ENCODE measurements at regions of chr1 and their contacts with region 1.

Region 1: GRCh38 chr1:219427403-219427802 is 185.5 kb downstream of the ZC3H11B start:
- DNase-seq: no peak
- ATAC-seq: no peak
- H3K4me3 Mint-ChIP-seq: no peak overlapping the region
- H3K27ac Mint-ChIP-seq: no peak overlapping the region
- H3K4me1 Mint-ChIP-seq: peaks cover 5% of the 10 kb centered on the region
- H3K27me3 Mint-ChIP-seq: peaks cover 2% of the 10 kb centered on the region

Region 2: DNA sequence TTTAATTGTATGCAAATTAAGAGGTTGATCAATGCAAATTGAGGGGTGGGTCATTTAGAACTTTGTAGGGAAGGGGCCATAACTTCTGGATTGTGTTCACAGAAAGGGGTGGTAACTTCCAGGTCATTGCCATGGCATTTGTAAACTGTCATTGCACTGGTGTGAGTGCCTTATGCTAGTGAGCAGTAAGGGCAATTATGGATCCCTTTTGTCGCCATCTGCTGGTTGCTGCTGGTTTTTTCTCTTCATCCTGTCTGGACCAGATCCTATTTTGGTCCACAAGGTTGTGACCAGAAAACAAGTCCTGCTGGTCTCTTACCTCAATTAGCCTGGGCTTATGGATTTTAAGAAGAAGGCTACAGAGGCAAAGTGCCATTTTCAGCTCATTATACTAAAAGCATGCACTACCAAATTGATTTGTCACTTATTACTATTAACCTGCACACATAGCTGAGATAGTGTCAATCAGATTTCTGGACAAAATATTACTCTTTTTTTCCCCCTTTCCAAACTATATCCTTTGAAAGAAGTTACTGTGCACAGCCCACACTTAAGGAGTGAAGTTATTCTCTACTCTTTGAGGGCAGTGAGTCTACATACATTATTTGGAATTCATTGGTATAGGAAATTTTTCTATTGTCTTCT is 10.7 kb before region 1 on chr1:
- CTCF ChIA-PET with region 1: interaction called, 13 read pairs
- DNase-seq: peak; percentile 65
- ATAC-seq: peak; percentile 73
- H3K4me3 Mint-ChIP-seq: no peak overlapping the region
- H3K27ac Mint-ChIP-seq: no peak overlapping the region
- H3K4me1 Mint-ChIP-seq: no peaks in the 10 kb centered on the region
- H3K27me3 Mint-ChIP-seq: peaks cover 13% of the 10 kb centered on the region

Region 3: DNA sequence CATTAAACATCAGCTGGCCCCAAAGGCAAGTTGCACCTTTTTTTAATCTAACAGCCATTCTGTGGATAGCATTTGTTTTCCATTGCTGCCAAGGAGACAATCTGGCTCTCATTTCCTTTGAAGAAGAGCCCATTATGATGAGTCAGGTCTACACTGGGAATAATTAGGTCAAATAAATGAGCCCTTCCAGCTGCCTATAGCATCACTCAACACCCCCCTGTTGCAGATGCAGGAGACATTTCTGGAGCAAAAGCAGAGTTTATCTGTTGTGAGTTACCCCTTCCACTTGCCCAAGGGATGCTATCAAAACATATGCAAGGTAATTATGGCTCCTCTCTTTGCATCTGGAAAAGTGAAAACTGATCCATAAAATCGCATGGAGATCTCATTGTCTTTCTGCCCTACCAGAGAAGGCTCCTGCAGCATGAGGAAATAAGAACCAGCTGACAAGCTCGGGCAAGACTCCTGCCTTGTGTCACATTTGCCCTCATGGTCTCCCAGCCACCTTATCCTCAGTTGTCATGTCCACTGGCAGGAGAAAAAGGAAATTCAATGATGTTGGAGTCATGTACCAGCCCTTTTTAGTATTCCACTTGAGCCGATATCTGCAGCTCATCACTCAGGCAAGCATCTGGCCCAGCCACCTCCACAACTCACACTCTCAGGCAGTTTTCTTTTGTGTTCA is 365.1 kb after region 1 on chr1:
- CTCF ChIA-PET with region 1: no interaction called
- DNase-seq: no peak
- ATAC-seq: no peak
- H3K4me3 Mint-ChIP-seq: no peak overlapping the region
- H3K27ac Mint-ChIP-seq: no peak overlapping the region
- H3K4me1 Mint-ChIP-seq: no peaks in the 10 kb centered on the region
- H3K27me3 Mint-ChIP-seq: no peaks in the 10 kb centered on the region